Thyroid gland (tissue), 4 donors: ENCODE measurements at regions of chr11 and their contacts with region 1.

Region 1: DNA sequence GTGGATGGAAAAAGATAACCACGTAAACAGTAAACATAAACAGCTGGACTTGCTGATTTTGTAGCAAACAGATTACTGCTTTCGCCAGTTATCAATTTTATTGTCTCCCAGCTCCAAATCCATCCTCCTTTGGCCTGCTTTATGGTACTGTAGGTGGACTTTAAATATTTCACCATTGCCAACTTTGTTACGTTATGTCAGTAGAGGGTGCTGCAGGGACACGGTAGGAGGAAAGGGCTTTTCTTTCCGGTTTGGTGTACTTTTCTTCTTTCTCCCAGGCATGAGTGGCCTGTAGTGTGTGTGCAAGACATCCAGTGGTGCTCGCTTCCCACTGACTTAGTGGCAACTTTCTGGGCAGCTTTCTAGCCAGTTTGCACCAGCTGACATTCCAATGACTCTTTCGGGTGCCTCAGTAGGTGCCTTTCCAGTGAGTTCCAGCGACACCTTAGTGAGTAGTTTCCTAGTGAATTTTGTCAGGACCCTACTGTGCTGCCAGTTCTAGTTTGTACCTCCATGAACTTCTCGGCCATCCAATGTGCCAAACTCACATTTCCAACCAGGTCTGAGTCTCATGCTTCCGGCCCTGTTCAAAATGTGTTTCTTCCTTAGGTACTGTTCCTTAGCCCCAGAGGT is 267.6 kb upstream of the TENM4 start:
- DNase-seq: no peak
- H3K4me3 ChIP-seq: no peak overlapping the region
- H3K27ac ChIP-seq: no peak overlapping the region
- H3K4me1 ChIP-seq: no peaks in the 10 kb centered on the region
- H3K27me3 ChIP-seq: no peaks in the 10 kb centered on the region
- CTCF ChIP-seq: peak in 2 of 6 experiments; percentile 6 to 14
- POLR2A ChIP-seq: no peak

Region 2: GRCh38 chr11:79686703-79687414 is 21.6 kb before region 1 on chr11:
- intact Hi-C with region 1: loop called (anchors 1 kb)
- DNase-seq: no peak
- H3K4me3 ChIP-seq: no peak overlapping the region
- H3K27ac ChIP-seq: no peak overlapping the region
- H3K4me1 ChIP-seq: no peaks in the 10 kb centered on the region
- H3K27me3 ChIP-seq: no peaks in the 10 kb centered on the region
- CTCF ChIP-seq: no peak
- POLR2A ChIP-seq: no peak